ENCODE measurements at regions of chr1 and their contacts with region 1.

Region 1: DNA sequence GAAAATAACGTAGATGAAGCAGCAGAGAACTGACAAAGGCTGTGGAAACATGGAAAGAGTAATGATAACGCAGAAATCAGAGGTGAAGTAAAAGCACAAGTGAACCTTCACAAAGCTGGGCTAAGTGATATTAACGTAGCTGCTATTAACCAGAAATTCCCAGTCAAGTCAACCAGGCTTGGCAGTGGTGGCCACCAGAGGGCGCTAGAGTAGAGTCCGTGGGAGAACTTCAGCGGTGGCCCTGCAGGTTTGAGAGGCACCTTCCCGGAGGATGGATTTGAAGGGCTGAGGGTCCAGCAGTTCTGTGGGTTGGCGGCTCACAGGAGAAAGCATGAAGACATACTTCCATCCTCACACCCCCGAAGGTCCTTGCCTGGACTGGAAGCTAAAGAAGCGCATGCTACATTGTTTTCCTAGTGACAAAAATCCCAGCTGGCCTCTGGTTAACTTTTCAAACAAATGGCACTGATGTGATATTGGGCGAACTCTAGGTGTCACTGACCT is 81.7 kb upstream of the ZNF648 start:
- DNase-seq: peak; percentile 91
- H3K4me3 Mint-ChIP-seq: no peak overlapping the region
- H3K27ac Mint-ChIP-seq: no peak overlapping the region
- H3K4me1 Mint-ChIP-seq: peaks cover 6% of the 10 kb centered on the region
- H3K27me3 Mint-ChIP-seq: peaks cover 4% of the 10 kb centered on the region

Region 2: GRCh38 chr1:182170891-182171461 is 27.8 kb after region 1 on chr1:
- CTCF ChIA-PET with region 1: interaction called, 11 read pairs
- POLR2A ChIA-PET with region 1: no interaction called
- intact Hi-C with region 1: no loop called
- DNase-seq: no peak
- H3K4me3 Mint-ChIP-seq: no peak overlapping the region
- H3K27ac Mint-ChIP-seq: no peak overlapping the region
- H3K4me1 Mint-ChIP-seq: peaks cover 5% of the 10 kb centered on the region
- H3K27me3 Mint-ChIP-seq: peaks cover 3% of the 10 kb centered on the region

Region 3: DNA sequence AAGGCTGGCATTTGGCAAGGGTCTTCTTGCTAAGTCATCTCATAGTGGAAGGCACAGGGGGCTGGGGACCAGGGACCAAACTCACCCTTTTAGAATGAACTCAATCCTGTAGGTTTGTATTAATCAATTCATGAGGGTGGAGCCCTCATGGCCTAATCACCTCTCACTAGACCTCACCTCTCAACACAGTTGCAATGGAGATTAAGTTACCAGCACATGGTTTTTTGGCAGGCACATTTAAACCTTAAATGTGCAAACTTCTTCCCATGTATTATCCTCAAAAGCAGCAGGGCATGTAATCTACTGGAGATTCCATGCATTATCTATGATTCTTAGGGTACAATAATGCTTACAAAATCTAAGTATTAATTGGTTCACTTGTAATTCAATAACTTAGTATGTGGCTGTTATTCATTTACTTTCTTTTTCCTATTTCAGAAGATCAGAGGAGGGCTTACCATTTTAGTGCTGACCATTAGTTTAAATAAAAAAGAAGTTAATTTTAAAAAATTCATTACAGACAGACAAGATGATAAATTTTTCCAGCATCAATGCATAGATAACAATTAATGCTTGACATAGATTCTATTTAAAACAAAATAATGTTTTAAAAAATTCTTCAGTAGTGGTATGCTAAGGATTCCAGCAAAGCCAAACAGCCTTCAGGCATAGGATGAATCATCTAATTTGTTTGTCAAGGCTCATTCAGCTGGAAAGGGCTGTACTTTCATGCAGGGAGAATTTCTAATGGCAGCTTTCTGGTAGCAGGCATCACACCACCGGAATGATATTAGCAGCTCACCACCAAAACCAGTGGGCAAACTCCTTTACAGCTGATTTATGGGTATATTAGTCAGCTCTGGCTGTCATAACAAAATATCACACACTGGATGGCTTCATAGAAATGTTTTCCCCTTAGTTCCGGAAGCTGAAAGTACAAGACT is 42.9 kb after region 1 on chr1:
- CTCF ChIA-PET with region 1: interaction called, 11 read pairs
- POLR2A ChIA-PET with region 1: no interaction called
- intact Hi-C with region 1: no loop called
- DNase-seq: no peak
- H3K4me3 Mint-ChIP-seq: no peak overlapping the region
- H3K27ac Mint-ChIP-seq: no peak overlapping the region
- H3K4me1 Mint-ChIP-seq: peaks cover 4% of the 10 kb centered on the region
- H3K27me3 Mint-ChIP-seq: peaks cover 11% of the 10 kb centered on the region

Region 4: GRCh38 chr1:182198049-182198501 is 54.9 kb after region 1 on chr1:
- CTCF ChIA-PET with region 1: interaction called, 19 read pairs
- POLR2A ChIA-PET with region 1: no interaction called
- intact Hi-C with region 1: no loop called
- DNase-seq: no peak
- H3K4me3 Mint-ChIP-seq: no peak overlapping the region
- H3K27ac Mint-ChIP-seq: no peak overlapping the region
- H3K4me1 Mint-ChIP-seq: no peaks in the 10 kb centered on the region
- H3K27me3 Mint-ChIP-seq: peaks cover 2% of the 10 kb centered on the region

Region 5: DNA sequence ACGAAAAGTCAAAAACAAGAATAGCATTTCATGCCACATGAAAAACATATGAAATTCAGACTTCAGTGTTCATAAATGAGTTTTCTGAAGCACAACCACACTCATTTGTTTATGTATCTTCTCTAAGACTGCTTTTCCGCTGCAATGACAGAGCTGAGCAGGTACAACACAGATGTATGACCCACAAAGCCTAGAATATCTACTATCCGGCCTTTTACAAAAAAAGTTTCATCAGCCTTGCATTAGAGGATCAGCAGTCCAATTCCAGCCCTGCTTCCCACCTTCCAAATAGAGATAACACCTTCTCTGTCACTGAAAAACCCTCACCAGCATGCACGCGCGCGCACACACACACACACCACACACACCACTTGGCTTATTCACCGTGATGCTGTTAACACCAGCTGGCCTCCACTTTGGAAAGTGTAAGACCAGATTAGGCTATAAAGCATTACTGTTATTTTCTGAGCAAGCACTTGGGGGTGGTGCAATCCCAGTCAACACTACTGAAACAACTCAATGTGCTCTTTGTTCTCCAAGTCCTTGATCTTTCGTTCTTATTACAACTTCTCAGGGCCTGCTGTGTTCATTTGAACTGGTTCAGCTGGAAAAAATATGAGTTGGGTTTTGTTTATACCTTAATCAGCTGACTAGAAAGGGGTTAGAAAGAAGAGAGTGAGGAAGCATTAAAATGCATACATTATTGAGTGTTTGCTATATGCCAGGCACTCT is 158.4 kb after region 1 on chr1:
- CTCF ChIA-PET with region 1: interaction called, 10 read pairs
- POLR2A ChIA-PET with region 1: no interaction called
- intact Hi-C with region 1: loop called (anchors 2 kb)
- DNase-seq: peak; percentile 65
- H3K4me3 Mint-ChIP-seq: no peak overlapping the region
- H3K27ac Mint-ChIP-seq: peak overlapping the region; percentile 80
- H3K4me1 Mint-ChIP-seq: peaks cover 28% of the 10 kb centered on the region
- H3K27me3 Mint-ChIP-seq: no peaks in the 10 kb centered on the region

Region 6: DNA sequence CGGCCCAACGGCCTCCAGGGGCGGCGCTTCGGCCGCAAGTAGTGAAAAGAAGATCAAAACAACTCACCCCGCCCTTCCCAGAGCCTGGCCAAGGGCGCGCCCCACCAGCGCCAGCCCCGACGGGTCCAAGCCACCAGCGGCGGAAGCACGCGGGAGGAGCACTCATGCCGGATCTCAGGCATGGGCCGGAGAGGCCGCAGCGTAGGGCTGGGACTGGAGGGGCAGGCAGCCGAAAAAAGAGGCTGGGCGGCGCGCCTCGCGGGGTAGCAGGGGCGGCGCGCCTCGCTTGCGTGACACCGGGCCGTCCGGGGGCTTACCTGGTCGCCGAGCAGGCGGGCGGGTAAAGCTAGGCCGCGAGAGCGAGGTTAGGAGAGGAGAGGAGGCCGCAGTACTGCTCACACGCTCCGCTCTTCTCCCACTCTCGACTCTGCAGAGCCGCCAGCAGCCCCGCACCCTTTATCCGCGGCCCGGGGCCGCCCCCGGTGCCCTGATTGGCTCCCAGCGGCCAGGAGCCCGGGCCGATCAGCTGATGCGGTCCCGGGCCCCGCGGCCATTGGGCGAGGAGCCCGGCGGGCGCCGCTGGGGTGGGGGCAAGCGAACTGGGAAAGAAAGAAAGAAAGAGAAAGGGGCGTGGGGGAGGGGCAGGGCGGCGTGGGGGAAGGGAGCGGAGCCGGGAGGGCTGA is 248.3 kb after region 1 on chr1 and contains the start of gene GLUL:
- CTCF ChIA-PET with region 1: interaction called, 375 read pairs
- POLR2A ChIA-PET with region 1: interaction called, 9 read pairs
- intact Hi-C with region 1: loop called (anchors 1 kb)
- DNase-seq: peak; percentile 82
- H3K4me3 Mint-ChIP-seq: peak within 1 kb of the TSS; percentile 93
- H3K27ac Mint-ChIP-seq: peak within 1 kb of the TSS; percentile 80
- H3K4me1 Mint-ChIP-seq: peaks cover 22% of the 10 kb centered on the region
- H3K27me3 Mint-ChIP-seq: peaks cover 7% of the 10 kb centered on the region
- total RNA-seq, gene GLUL: 61.3 to 63.9 TPM

Region 7: DNA sequence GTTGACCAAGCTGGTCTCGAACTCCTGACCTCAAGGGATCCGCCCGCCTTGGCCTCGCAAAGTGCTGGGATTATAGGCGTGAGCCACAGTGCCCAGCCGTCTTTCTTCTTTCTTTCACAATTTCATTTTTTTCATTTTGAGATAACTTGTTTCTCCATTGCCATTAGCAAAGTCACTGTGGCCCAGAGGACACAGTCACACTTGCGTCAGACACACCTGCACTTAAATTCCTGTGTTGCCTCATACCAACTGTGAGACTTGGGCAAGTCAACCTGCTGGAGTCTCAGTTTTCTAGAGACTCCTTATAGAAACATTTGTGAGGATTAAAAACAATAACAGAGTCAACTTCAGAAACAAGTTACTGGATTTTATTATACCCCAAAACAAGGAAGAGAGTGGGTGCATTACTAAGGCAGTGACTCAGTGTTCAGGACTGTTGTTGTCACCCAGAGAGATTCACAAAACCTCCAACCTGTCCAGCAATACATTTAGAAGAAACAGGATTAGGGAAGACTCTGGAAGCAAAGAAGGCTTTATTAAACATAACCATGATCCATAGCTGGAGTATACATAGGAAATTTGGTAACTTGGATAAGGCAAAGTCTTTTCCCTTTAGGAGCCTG is 254.7 kb after region 1 on chr1:
- CTCF ChIA-PET with region 1: interaction called, 375 read pairs
- POLR2A ChIA-PET with region 1: interaction called, 9 read pairs
- intact Hi-C with region 1: loop called (anchors 1 kb)
- DNase-seq: no peak
- H3K4me3 Mint-ChIP-seq: no peak overlapping the region
- H3K27ac Mint-ChIP-seq: no peak overlapping the region
- H3K4me1 Mint-ChIP-seq: peaks cover 4% of the 10 kb centered on the region
- H3K27me3 Mint-ChIP-seq: no peaks in the 10 kb centered on the region

Region 8: GRCh38 chr1:182520736-182521135 is 377.5 kb after region 1 on chr1:
- CTCF ChIA-PET with region 1: no interaction called
- POLR2A ChIA-PET with region 1: no interaction called
- intact Hi-C with region 1: no loop called
- DNase-seq: no peak
- H3K4me3 Mint-ChIP-seq: no peak overlapping the region
- H3K27ac Mint-ChIP-seq: no peak overlapping the region
- H3K4me1 Mint-ChIP-seq: no peaks in the 10 kb centered on the region
- H3K27me3 Mint-ChIP-seq: peaks cover 8% of the 10 kb centered on the region